Activated naive CD4-positive, alpha-beta T cell treated with anti-CD3 and anti-CD28 coated beads for 36 hours (primary cell): ENCODE measurements at regions of chr19 and their contacts with region 1.

Region 1: GRCh38 chr19:28324275-28325060 is 888.5 kb downstream of the UQCRFS1 start:
- DNase-seq: no peak
- H3K4me3 Mint-ChIP-seq: no peak overlapping the region
- H3K27ac Mint-ChIP-seq: no peak overlapping the region
- H3K4me1 Mint-ChIP-seq: no peaks in the 10 kb centered on the region
- H3K27me3 Mint-ChIP-seq: no peaks in the 10 kb centered on the region

Region 2: GRCh38 chr19:27679399-27679798 is 645.1 kb before region 1 on chr19:
- CTCF ChIA-PET with region 1: no interaction called
- intact Hi-C with region 1: no loop called
- DNase-seq: no peak
- H3K4me3 Mint-ChIP-seq: no peak overlapping the region
- H3K27ac Mint-ChIP-seq: no peak overlapping the region
- H3K4me1 Mint-ChIP-seq: no peaks in the 10 kb centered on the region
- H3K27me3 Mint-ChIP-seq: no peaks in the 10 kb centered on the region

Region 3: GRCh38 chr19:27966390-27966816 is 358.1 kb before region 1 on chr19:
- CTCF ChIA-PET with region 1: interaction called, 3 read pairs
- intact Hi-C with region 1: loop called (anchors 2 kb)
- DNase-seq: no peak
- H3K4me3 Mint-ChIP-seq: no peak overlapping the region
- H3K27ac Mint-ChIP-seq: no peak overlapping the region
- H3K4me1 Mint-ChIP-seq: no peaks in the 10 kb centered on the region
- H3K27me3 Mint-ChIP-seq: peaks cover 2% of the 10 kb centered on the region

Region 4: GRCh38 chr19:28213470-28214082 is 110.9 kb before region 1 on chr19:
- CTCF ChIA-PET with region 1: no interaction called
- intact Hi-C with region 1: no loop called
- DNase-seq: no peak
- H3K4me3 Mint-ChIP-seq: no peak overlapping the region
- H3K27ac Mint-ChIP-seq: no peak overlapping the region
- H3K4me1 Mint-ChIP-seq: no peaks in the 10 kb centered on the region
- H3K27me3 Mint-ChIP-seq: no peaks in the 10 kb centered on the region

Region 5: DNA sequence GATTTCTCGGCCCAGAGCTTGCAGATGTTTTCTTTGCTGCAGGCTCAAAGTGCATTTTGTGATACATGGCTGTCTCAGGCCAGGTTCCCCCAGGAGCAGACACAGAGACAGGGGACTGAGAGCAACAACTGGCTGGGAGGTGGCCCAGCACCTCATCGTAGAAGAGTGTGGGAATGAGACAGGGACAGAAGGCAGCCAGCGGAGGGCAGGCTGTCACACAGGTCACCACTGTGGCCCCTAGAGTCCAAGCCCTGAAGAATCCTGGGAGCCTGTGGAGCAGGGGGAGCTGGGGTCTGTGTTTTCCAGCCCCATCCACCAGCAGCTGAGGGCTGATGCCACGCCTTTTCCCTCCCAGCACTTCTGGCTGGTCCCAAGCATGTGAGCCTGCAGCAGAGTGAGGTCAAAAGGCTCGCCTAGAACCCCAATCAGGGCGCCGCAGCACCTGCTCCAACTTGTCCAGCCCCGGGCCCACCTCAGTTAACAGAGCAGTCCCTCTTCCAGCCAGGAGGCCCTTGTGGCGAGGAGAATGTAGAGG is 164.7 kb after region 1 on chr19:
- CTCF ChIA-PET with region 1: no interaction called
- intact Hi-C with region 1: no loop called
- DNase-seq: no peak
- H3K4me3 Mint-ChIP-seq: no peak overlapping the region
- H3K27ac Mint-ChIP-seq: no peak overlapping the region
- H3K4me1 Mint-ChIP-seq: no peaks in the 10 kb centered on the region
- H3K27me3 Mint-ChIP-seq: no peaks in the 10 kb centered on the region

Region 6: DNA sequence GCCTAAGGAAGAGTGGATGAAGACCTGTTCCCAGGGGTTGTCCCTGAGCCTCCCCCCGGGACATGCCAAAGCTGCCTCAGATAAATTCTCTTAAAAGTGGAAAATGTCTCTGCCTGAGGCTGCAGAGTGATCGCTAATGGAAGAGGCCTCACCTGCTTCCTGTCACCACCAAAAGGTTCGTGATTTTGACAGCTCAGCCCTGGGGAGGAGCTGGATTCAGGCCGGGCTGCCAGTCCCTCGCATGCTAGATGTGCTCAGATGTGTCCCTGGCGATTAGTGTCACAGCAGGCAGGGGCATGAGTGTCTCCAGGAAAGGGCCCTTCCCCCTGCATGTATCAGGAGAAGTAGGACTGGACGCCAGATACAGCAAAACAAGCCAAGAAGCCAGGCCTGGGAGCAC is 262.0 kb after region 1 on chr19:
- CTCF ChIA-PET with region 1: no interaction called
- intact Hi-C with region 1: no loop called
- DNase-seq: no peak
- H3K4me3 Mint-ChIP-seq: no peak overlapping the region
- H3K27ac Mint-ChIP-seq: no peak overlapping the region
- H3K4me1 Mint-ChIP-seq: no peaks in the 10 kb centered on the region
- H3K27me3 Mint-ChIP-seq: peaks cover 2% of the 10 kb centered on the region